ENCODE measurements at regions of chr12 and their contacts with region 1.

Region 1: DNA sequence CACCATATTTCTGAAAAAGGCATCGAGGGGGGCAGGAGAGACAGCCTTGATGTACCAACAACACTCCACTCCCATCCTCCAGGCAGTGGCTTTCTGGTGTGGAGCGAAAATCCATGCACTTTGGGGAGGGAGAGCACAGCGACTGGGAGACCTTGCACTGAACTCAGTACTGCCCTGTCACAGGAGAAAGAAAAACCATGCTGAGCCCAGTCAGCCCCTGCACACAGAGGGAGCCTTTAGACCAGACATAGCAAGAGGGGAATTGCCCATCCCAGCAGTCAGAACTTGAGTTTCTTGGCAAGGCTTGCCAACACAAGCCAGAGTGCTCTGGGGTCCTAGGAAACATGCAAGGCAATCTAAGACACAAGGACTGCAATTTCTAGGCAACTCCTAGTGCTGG is 24.8 kb upstream of the SLC6A15 start:
- DNase-seq: no peak
- H3K4me3 ChIP-seq: no peak overlapping the region
- H3K27ac ChIP-seq: no peak overlapping the region
- H3K4me1 ChIP-seq: no peaks in the 10 kb centered on the region
- H3K27me3 ChIP-seq: no peaks in the 10 kb centered on the region
- CTCF ChIP-seq: no peak
- POLR2A ChIP-seq: no peak

Region 2: GRCh38 chr12:84924981-84925380 is 12.4 kb before region 1 on chr12:
- CTCF ChIA-PET with region 1: interaction called, 10 read pairs
- POLR2A ChIA-PET with region 1: no interaction called
- dilution Hi-C with region 1: no loop called
- intact Hi-C with region 1: no loop called
- DNase-seq: no peak
- H3K4me3 ChIP-seq: no peak overlapping the region
- H3K27ac ChIP-seq: no peak overlapping the region
- H3K4me1 ChIP-seq: no peaks in the 10 kb centered on the region
- H3K27me3 ChIP-seq: peaks cover 2 to 10% of the 10 kb centered on the region in 2 experiments
- CTCF ChIP-seq: no peak
- POLR2A ChIP-seq: no peak

Region 3: GRCh38 chr12:84955298-84955697 is 17.9 kb after region 1 on chr12:
- CTCF ChIA-PET with region 1: no interaction called
- POLR2A ChIA-PET with region 1: no interaction called
- dilution Hi-C with region 1: no loop called
- intact Hi-C with region 1: no loop called
- DNase-seq: no peak
- H3K4me3 ChIP-seq: no peak overlapping the region
- H3K27ac ChIP-seq: no peak overlapping the region
- H3K4me1 ChIP-seq: no peaks in the 10 kb centered on the region
- H3K27me3 ChIP-seq: no peaks in the 10 kb centered on the region
- CTCF ChIP-seq: no peak
- POLR2A ChIP-seq: no peak

Region 4: DNA sequence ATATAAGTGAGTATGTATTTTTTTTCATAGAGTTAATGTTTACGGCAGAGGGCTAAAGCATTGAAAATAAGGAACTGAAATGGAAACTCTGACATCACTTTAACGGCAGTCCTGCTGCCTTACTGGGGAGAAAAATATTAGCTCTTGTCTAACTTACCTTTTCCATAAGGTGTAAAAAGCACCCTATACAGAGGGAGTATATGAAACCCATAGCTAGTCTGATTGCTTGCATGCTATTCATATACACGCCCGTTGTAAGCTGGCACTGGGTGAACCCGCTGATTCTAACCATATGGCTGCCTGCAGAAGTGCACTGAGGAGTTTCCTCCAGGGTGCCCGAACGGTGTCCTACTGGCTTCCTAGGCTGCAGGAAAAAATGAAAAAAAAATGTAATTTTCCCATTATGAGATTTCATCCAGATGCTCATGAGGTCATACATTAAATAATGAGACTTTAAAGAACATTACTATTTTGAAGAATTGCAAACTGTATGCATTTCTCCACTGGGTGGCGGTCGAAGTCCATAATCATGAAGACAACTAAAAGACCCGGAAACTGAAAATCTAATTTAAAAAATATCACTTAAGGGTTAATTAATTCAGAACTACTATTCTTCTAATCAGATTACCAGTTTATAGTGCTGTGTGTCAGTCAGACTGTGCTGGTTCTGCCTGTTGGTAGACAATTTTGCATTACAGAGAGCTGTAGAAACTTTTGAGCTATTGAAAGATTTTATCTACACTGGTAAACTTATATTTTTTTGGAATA is 487.4 kb after region 1 on chr12:
- CTCF ChIA-PET with region 1: no interaction called
- POLR2A ChIA-PET with region 1: no interaction called
- dilution Hi-C with region 1: no loop called
- intact Hi-C with region 1: no loop called
- DNase-seq: peak; percentile 31
- H3K4me3 ChIP-seq: no peak overlapping the region
- H3K27ac ChIP-seq: no peak overlapping the region
- H3K4me1 ChIP-seq: no peaks in the 10 kb centered on the region
- H3K27me3 ChIP-seq: no peaks in the 10 kb centered on the region
- CTCF ChIP-seq: peak; percentile 24
- POLR2A ChIP-seq: no peak